CD14-positive monocyte (primary cell): ENCODE measurements at regions of chr15 and their contacts with region 1.

Region 1: GRCh38 chr15:31435261-31435911 is 108.8 kb downstream of the KLF13 start:
- DNase-seq: peak; percentile 80 to 89 (median 85)
- H3K4me3 ChIP-seq: peak overlapping the region; percentile 40 to 69 (median 48)
- H3K4me3 Mint-ChIP-seq: peak overlapping the region; percentile 78 to 91
- H3K27ac ChIP-seq: peak overlapping the region; percentile 81 to 98
- H3K27ac Mint-ChIP-seq: peak overlapping the region; percentile 95 to 98 (median 96)
- H3K4me1 ChIP-seq: peaks cover 50 to 53% of the 10 kb centered on the region in 2 donors
- H3K4me1 Mint-ChIP-seq: peaks cover 51% of the 10 kb centered on the region
- H3K27me3 ChIP-seq: no peaks in the 10 kb centered on the region
- H3K27me3 Mint-ChIP-seq: peaks cover 0 to 4% (median 3%) of the 10 kb centered on the region in 3 donors
- CTCF ChIP-seq: peak; percentile 79

Region 2: GRCh38 chr15:31391687-31392671 is 43.4 kb before region 1 on chr15:
- intact Hi-C with region 1: loop called (anchors 5 kb)
- DNase-seq: peak; percentile 84 to 88 (median 88)
- H3K4me3 ChIP-seq: peak overlapping the region; percentile 37 to 77 (median 47)
- H3K4me3 Mint-ChIP-seq: peak overlapping the region; percentile 83 to 93
- H3K27ac ChIP-seq: peak overlapping the region in 1 of 2 donors; percentile 41
- H3K27ac Mint-ChIP-seq: peak overlapping the region in 5 of 7 donors; percentile 50 to 80 (median 55)
- H3K4me1 ChIP-seq: peaks cover 17 to 24% of the 10 kb centered on the region in 2 donors
- H3K4me1 Mint-ChIP-seq: peaks cover 26% of the 10 kb centered on the region
- H3K27me3 ChIP-seq: peaks cover 11 to 35% of the 10 kb centered on the region in 2 donors
- H3K27me3 Mint-ChIP-seq: peaks cover 33 to 59% (median 52%) of the 10 kb centered on the region in 3 donors
- CTCF ChIP-seq: no peak

Region 3: GRCh38 chr15:31396881-31397560 is 38.4 kb before region 1 on chr15:
- intact Hi-C with region 1: loop called (anchors 5 kb)
- DNase-seq: peak; percentile 86 to 94 (median 92)
- H3K4me3 ChIP-seq: peak overlapping the region in 1 of 3 experiments; percentile 33
- H3K4me3 Mint-ChIP-seq: peak overlapping the region; percentile 31 to 39
- H3K27ac ChIP-seq: peak overlapping the region in 1 of 2 donors; percentile 44
- H3K27ac Mint-ChIP-seq: peak overlapping the region in 4 of 7 donors; percentile 58 to 75 (median 62)
- H3K4me1 ChIP-seq: peaks cover 24 to 29% of the 10 kb centered on the region in 2 donors
- H3K4me1 Mint-ChIP-seq: peaks cover 32% of the 10 kb centered on the region
- H3K27me3 ChIP-seq: peaks cover 5 to 17% of the 10 kb centered on the region in 2 donors
- H3K27me3 Mint-ChIP-seq: peaks cover 21 to 33% (median 28%) of the 10 kb centered on the region in 3 donors
- CTCF ChIP-seq: no peak